PC-3 (cell line): ENCODE measurements at regions of chr7 and their contacts with region 1.

Region 1: GRCh38 chr7:99616359-99617191 is at the start of gene ZSCAN25:
- DNase-seq: peak; percentile 93
- ATAC-seq: peak; percentile 90
- H3K4me3 ChIP-seq: peak within 1 kb of the TSS; percentile 96
- H3K27ac ChIP-seq: peak within 1 kb of the TSS; percentile 54; the same call in 1 of the 2 replicates
- H3K4me1 ChIP-seq: peaks cover 21% of the 10 kb centered on the region
- H3K27me3 ChIP-seq: no peaks in the 10 kb centered on the region
- CTCF ChIP-seq: peak; percentile 60
- total RNA-seq, gene ZSCAN25: 13.9 and 18.9 TPM in 2 replicates

Region 2: GRCh38 chr7:99504603-99505323 is 111.8 kb before region 1 on chr7 and contains the start of gene ZKSCAN5:
- CTCF ChIA-PET with region 1: no interaction called
- POLR2A ChIA-PET with region 1: no interaction called
- intact Hi-C with region 1: loop called (anchors 1 kb)
- DNase-seq: peak; percentile 85
- ATAC-seq: peak; percentile 81
- H3K4me3 ChIP-seq: peak within 1 kb of the TSS; percentile 84
- H3K27ac ChIP-seq: peak within 1 kb of the TSS; percentile 39
- H3K4me1 ChIP-seq: 0 out of 2 replicates have a peak, but pooled peaks cover 5% of the 10 kb centered on the region
- H3K27me3 ChIP-seq: no peaks in the 10 kb centered on the region
- CTCF ChIP-seq: no peak
- total RNA-seq, gene ZKSCAN5: 8.6 and 9.9 TPM in 2 replicates

Region 3: DNA sequence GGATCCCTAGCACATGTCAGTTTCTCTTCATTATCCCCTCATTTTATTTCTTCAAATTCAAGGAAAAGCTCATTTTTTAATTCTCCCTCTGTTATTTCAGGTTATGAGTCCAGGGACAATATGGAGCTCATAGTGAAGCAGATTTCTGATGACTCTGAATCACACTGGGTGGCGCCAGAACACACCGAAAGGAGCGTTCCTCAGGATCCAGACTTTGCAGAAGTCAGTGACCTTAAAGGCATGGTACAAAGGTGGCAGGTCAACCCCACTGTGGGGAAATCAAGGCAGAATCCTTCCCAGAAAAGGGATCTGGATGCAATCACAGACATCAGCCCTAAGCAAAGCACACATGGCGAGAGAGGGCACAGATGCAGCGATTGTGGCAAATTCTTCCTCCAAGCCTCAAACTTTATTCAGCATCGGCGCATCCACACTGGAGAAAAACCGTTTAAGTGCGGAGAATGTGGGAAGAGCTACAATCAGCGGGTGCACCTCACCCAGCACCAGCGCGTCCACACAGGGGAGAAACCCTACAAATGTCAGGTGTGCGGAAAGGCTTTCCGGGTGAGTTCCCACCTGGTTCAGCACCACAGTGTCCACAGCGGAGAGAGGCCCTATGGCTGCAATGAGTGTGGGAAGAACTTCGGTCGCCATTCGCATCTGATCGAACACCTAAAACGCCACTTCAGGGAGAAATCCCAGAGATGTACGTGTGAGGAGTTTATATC is 90.7 kb before region 1 on chr7:
- CTCF ChIA-PET with region 1: interaction called, 8 read pairs
- POLR2A ChIA-PET with region 1: interaction called, 6 read pairs
- intact Hi-C with region 1: loop called (anchors 1 kb)
- DNase-seq: peak; percentile 42
- ATAC-seq: peak; percentile 67; the same call in 1 of the 2 replicates
- H3K4me3 ChIP-seq: no peak overlapping the region
- H3K27ac ChIP-seq: no peak overlapping the region
- H3K4me1 ChIP-seq: no peaks in the 10 kb centered on the region
- H3K27me3 ChIP-seq: no peaks in the 10 kb centered on the region
- CTCF ChIP-seq: peak; percentile 73

Region 4: GRCh38 chr7:99551767-99552463 is 64.7 kb before region 1 on chr7 and contains the start of gene FAM200A:
- CTCF ChIA-PET with region 1: no interaction called
- POLR2A ChIA-PET with region 1: no interaction called
- intact Hi-C with region 1: loop called (anchors 2 kb)
- DNase-seq: peak; percentile 90
- ATAC-seq: peak; percentile 99
- H3K4me3 ChIP-seq: peak within 1 kb of the TSS; percentile 92
- H3K27ac ChIP-seq: 0 out of 2 replicates have a peak within 1 kb of the TSS, but pooled peaks have one; percentile 11
- H3K4me1 ChIP-seq: no peaks in the 10 kb centered on the region
- H3K27me3 ChIP-seq: no peaks in the 10 kb centered on the region
- CTCF ChIP-seq: no peak
- total RNA-seq, gene FAM200A: 2.2 and 3.8 TPM in 2 replicates

Region 5: DNA sequence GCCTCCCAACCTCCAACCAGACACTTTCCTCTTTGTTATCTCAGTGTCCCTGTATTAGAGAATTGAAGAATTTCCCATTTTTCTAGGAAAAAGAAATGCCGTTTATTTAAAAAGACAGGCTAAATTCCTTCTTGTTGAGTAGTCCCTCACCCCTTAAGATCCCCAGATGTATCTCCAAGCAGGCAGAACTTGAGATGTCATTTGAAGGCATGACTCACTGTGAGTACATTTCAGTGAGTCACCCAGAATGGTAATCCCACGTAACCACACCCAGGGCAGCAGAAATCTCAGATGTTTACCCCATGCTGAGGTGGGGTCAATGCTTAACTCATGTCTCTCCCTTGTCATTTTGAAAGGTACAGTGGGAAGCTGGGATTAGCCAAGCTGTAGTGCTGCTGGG is 53.7 kb before region 1 on chr7:
- CTCF ChIA-PET with region 1: no interaction called
- POLR2A ChIA-PET with region 1: interaction called, 3 read pairs
- intact Hi-C with region 1: loop called (anchors 2 kb)
- DNase-seq: peak; percentile 97
- ATAC-seq: peak; percentile 97
- H3K4me3 ChIP-seq: peak overlapping the region; percentile 42
- H3K27ac ChIP-seq: peak overlapping the region; percentile 88
- H3K4me1 ChIP-seq: peaks cover 27% of the 10 kb centered on the region
- H3K27me3 ChIP-seq: no peaks in the 10 kb centered on the region
- CTCF ChIP-seq: no peak

Region 6: DNA sequence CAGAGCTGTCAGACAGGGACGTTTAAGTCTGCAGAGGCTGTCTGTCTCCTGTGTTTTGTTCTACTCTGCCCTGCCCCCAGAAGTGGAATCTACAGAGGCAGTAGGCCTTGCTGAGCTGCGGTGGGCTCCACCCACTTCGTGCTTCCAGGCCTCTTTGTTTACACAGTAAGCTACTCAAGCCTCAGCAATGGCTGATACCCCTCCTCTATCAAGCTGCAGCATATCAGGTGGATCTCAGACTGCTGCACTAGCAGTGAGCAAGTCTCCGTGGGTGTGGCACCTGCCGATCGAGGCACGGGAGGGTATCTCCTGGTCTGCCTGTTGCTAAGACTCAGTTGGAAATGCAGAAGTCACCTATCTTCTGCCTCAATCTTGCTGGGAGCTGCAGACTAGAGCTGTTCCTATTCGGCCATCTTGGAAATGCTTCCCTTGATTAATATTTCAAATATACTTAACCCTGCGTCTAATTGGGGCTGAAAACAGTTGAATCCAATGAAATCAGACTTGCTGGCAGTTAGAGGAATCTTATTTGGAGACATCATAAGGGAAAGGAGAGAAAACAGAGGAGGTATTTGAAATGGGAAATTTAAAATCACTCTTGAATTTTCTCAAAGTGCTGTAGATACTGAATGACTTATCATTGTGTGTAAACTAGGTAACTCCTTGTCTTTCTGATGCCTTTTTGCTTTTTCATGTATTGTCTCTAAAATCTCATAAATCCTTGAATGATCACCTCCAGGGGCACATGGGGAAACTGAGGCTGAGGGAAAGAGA is 77.0 kb after region 1 on chr7:
- CTCF ChIA-PET with region 1: no interaction called
- POLR2A ChIA-PET with region 1: no interaction called
- intact Hi-C with region 1: no loop called
- DNase-seq: no peak
- ATAC-seq: no peak
- H3K4me3 ChIP-seq: no peak overlapping the region
- H3K27ac ChIP-seq: no peak overlapping the region
- H3K4me1 ChIP-seq: peaks cover 2% of the 10 kb centered on the region
- H3K27me3 ChIP-seq: no peaks in the 10 kb centered on the region
- CTCF ChIP-seq: no peak

Region 7: GRCh38 chr7:99837649-99838361 is 221.2 kb after region 1 on chr7:
- CTCF ChIA-PET with region 1: no interaction called
- POLR2A ChIA-PET with region 1: no interaction called
- intact Hi-C with region 1: loop called (anchors 5 kb)
- DNase-seq: peak; percentile 32
- ATAC-seq: peak; percentile 68
- H3K4me3 ChIP-seq: no peak overlapping the region
- H3K27ac ChIP-seq: no peak overlapping the region
- H3K4me1 ChIP-seq: 0 out of 2 replicates have a peak, but pooled peaks cover 4% of the 10 kb centered on the region
- H3K27me3 ChIP-seq: peaks cover 18% of the 10 kb centered on the region; the same call in 1 of the 2 replicates
- CTCF ChIP-seq: peak; percentile 46

Region 8: GRCh38 chr7:99918959-99919813 is 302.6 kb after region 1 on chr7 and contains the start of gene TRIM4:
- CTCF ChIA-PET with region 1: no interaction called
- POLR2A ChIA-PET with region 1: no interaction called
- intact Hi-C with region 1: loop called (anchors 5 kb)
- DNase-seq: peak; percentile 83
- ATAC-seq: peak; percentile 99
- H3K4me3 ChIP-seq: peak within 1 kb of the TSS; percentile 94
- H3K27ac ChIP-seq: peak within 1 kb of the TSS; percentile 47
- H3K4me1 ChIP-seq: peaks cover 16% of the 10 kb centered on the region
- H3K27me3 ChIP-seq: no peaks in the 10 kb centered on the region
- CTCF ChIP-seq: peak; percentile 5; the same call in 1 of the 2 replicates
- total RNA-seq, gene TRIM4: 11.1 and 13.9 TPM in 2 replicates